Panc1 (cell line): ENCODE measurements at regions of chr2 and their contacts with region 1.

Region 1: GRCh38 chr2:163171786-163172531 is 333.4 kb upstream of the KCNH7 start:
- DNase-seq: no peak
- ATAC-seq: no peak
- H3K4me3 ChIP-seq: no peak overlapping the region
- H3K27ac ChIP-seq: no peak overlapping the region
- H3K4me1 ChIP-seq: no peaks in the 10 kb centered on the region
- H3K27me3 ChIP-seq: no peaks in the 10 kb centered on the region; the same call in 1 of the 2 replicates
- CTCF ChIP-seq: no peak

Region 2: DNA sequence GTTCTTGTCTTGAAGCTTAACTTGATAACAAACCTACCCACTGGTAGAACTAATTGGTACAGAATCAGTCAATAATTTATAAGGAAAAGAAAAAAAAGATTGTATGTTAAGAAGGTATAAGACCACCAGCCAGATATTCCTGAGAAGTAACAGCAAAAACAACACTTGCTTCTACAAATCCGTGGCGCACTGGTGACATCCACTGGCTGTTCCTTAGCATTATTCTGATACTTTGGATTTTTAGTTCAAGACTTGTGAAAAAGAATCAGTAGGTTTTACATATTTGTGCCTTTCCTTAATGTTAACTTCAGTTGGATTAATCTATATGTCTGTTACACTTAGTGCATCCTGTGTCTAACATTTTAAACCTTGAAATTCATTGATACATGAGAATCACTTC is 1307.5 kb after region 1 on chr2:
- CTCF ChIA-PET with region 1: no interaction called
- POLR2A ChIA-PET with region 1: no interaction called
- in situ Hi-C with region 1: no loop called
- intact Hi-C with region 1: loop called (anchors 5 kb)
- DNase-seq: no peak
- ATAC-seq: no peak
- H3K4me3 ChIP-seq: no peak overlapping the region
- H3K27ac ChIP-seq: no peak overlapping the region
- H3K4me1 ChIP-seq: no peaks in the 10 kb centered on the region
- H3K27me3 ChIP-seq: no peaks in the 10 kb centered on the region
- CTCF ChIP-seq: peak; percentile 59; the same call in 1 of the 2 replicates

Region 3: DNA sequence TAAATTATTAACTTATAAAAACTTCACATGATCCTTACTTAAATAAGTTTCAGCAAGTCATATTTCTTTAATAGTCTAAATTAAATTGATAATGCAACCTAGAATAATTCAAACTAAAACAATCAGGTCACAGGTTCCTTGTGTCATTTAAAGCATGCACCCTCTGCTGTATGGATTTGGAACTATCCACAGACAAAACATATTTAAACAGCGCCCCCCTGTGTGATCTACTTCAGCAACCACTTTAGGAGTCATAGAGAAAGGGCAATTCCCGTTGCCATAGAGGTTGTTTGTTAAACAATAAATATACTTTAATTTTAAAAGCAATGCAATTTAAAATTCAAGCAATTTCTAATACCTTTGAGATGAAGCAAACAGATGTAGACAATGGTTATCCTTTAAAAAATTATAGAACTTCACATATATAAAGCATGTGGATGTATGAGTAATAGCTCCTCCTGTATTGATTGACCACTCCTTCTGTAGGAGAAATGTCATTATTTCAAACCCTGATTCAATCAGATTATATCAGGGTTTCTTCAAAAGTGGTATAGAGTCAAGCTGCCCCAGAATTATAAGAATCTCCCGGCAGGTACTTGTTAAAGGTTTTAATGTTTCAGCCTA is 1428.1 kb after region 1 on chr2:
- CTCF ChIA-PET with region 1: no interaction called
- POLR2A ChIA-PET with region 1: no interaction called
- in situ Hi-C with region 1: no loop called
- intact Hi-C with region 1: loop called (anchors 5 kb)
- DNase-seq: peak; percentile 30
- ATAC-seq: peak; percentile 78; the same call in 1 of the 2 replicates
- H3K4me3 ChIP-seq: no peak overlapping the region
- H3K27ac ChIP-seq: no peak overlapping the region
- H3K4me1 ChIP-seq: no peaks in the 10 kb centered on the region
- H3K27me3 ChIP-seq: no peaks in the 10 kb centered on the region
- CTCF ChIP-seq: peak; percentile 73; the same call in 1 of the 2 replicates